ENCODE measurements at regions of chr16 and their contacts with region 1.

Region 1: DNA sequence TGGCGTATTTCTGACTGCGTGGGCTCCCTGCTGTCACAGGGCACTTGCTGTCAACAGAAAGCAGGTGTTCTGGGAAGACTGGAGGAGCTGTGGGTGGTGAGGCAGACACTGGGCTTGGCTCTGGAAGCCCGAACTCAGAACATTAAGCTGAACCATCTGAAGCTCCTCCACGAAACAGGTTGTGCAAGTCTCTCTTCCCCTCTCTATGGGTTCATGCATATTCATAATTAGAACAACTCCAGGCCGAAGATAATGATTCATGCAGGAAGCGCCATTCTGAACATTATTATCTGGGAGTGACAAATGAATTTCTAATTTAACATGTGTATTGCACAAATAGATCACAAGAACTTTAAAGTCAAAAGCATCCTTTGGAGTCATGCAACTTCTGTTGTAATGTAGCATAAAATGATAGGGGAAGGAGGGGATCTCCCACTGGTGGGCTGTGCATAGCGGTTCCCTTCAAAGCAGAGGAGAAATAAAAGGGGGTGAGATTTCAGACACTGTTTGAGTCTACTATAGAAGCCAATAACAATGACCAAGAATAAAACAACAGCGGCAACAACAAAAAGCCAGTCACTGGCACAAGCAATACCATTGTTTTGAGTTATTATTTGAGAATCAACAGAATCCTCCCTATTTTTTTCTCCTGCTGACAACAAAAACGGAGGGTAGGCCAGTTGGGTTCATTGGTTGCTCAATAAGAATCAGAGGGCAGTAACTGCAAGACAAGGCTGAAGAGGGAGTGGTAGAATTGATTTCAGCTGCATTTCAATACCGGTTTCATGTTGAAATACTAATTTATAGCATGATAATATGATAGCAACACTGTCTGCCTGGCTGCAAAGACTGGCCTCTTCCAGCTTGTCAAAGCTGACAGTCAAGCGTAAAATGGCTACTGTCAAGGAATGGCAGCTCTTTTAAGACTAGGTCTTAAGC is 407.3 kb downstream of the XYLT1 start:
- DNase-seq: no peak
- ATAC-seq: no peak
- H3K4me3 ChIP-seq: no peak overlapping the region
- H3K4me3 Mint-ChIP-seq: no peak overlapping the region
- H3K27ac ChIP-seq: no peak overlapping the region
- H3K27ac Mint-ChIP-seq: no peak overlapping the region
- H3K4me1 ChIP-seq: no peaks in the 10 kb centered on the region
- H3K4me1 Mint-ChIP-seq: peaks cover 0 to 4% (median under 1%) of the 10 kb centered on the region in 3 donors
- H3K27me3 ChIP-seq: no peaks in the 10 kb centered on the region
- H3K27me3 Mint-ChIP-seq: no peaks in the 10 kb centered on the region

Region 2: GRCh38 chr16:17643935-17644334 is 580.5 kb after region 1 on chr16:
- CTCF ChIA-PET with region 1: no interaction called
- POLR2A ChIA-PET with region 1: interaction called in 1 of 2 experiments, 14 read pairs
- DNase-seq: no peak
- ATAC-seq: no peak
- H3K4me3 ChIP-seq: no peak overlapping the region
- H3K4me3 Mint-ChIP-seq: no peak overlapping the region
- H3K27ac ChIP-seq: no peak overlapping the region
- H3K27ac Mint-ChIP-seq: no peak overlapping the region
- H3K4me1 ChIP-seq: no peaks in the 10 kb centered on the region
- H3K4me1 Mint-ChIP-seq: no peaks in the 10 kb centered on the region
- H3K27me3 ChIP-seq: no peaks in the 10 kb centered on the region
- H3K27me3 Mint-ChIP-seq: peaks cover 4 to 12% of the 10 kb centered on the region in 2 donors